ENCODE measurements at regions of chr5 and their contacts with region 1.

Region 1: GRCh38 chr5:154972476-154973080 is 31.7 kb downstream of the MRPL22 start:
- DNase-seq: peak; percentile 38 to 68 (median 67)
- H3K4me3 ChIP-seq: no peak overlapping the region
- H3K27ac ChIP-seq: no peak overlapping the region
- H3K4me1 ChIP-seq: peaks cover 0 to 2% (median 0%) of the 10 kb centered on the region in 4 experiments
- H3K27me3 ChIP-seq: no peaks in the 10 kb centered on the region

Region 2: GRCh38 chr5:154892369-154892771 is 80.2 kb before region 1 on chr5:
- CTCF ChIA-PET with region 1: no interaction called
- POLR2A ChIA-PET with region 1: no interaction called
- DNase-seq: no peak
- H3K4me3 ChIP-seq: no peak overlapping the region
- H3K27ac ChIP-seq: no peak overlapping the region
- H3K4me1 ChIP-seq: no peaks in the 10 kb centered on the region
- H3K27me3 ChIP-seq: no peaks in the 10 kb centered on the region

Region 3: GRCh38 chr5:154937718-154938466 is 34.7 kb before region 1 on chr5 and contains the start of gene GEMIN5:
- CTCF ChIA-PET with region 1: no interaction called
- POLR2A ChIA-PET with region 1: no interaction called
- DNase-seq: peak; percentile 84 to 92 (median 91)
- H3K4me3 ChIP-seq: peak within 1 kb of the TSS; percentile 50 to 96 (median 87)
- H3K27ac ChIP-seq: peak within 1 kb of the TSS; percentile 28 to 76
- H3K4me1 ChIP-seq: peaks cover 20 to 36% (median 33%) of the 10 kb centered on the region in 4 experiments
- H3K27me3 ChIP-seq: no peaks in the 10 kb centered on the region

Region 4: GRCh38 chr5:154962494-154962893 is 10.1 kb before region 1 on chr5:
- CTCF ChIA-PET with region 1: interaction called, 11 read pairs
- POLR2A ChIA-PET with region 1: no interaction called
- DNase-seq: no peak
- H3K4me3 ChIP-seq: no peak overlapping the region
- H3K27ac ChIP-seq: no peak overlapping the region
- H3K4me1 ChIP-seq: no peaks in the 10 kb centered on the region
- H3K27me3 ChIP-seq: no peaks in the 10 kb centered on the region

Region 5: DNA sequence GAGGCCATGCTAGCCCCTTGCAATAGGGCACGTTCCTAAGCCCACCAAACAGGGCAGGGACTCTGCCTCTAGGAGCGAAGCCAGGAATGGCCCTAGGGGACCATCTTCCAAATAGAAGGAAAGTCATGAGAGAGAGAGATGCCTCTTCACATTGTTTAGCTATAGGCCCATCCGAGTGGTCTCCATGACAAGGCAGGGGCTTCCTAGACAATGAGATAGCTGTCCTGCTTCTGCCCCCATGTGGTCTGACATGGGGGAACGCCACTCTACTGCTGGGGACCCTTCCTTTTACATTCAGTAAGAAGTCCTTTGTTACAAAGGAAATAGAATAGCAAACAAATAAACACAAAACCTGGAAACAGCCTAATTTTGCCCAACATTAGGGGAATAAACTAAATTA is 23.1 kb after region 1 on chr5:
- CTCF ChIA-PET with region 1: interaction called, 131 read pairs
- POLR2A ChIA-PET with region 1: no interaction called
- DNase-seq: peak in 2 of 3 donors; percentile 16 to 28
- H3K4me3 ChIP-seq: no peak overlapping the region
- H3K27ac ChIP-seq: no peak overlapping the region
- H3K4me1 ChIP-seq: peaks cover 0 to 16% (median 0%) of the 10 kb centered on the region in 4 experiments
- H3K27me3 ChIP-seq: no peaks in the 10 kb centered on the region

Region 6: DNA sequence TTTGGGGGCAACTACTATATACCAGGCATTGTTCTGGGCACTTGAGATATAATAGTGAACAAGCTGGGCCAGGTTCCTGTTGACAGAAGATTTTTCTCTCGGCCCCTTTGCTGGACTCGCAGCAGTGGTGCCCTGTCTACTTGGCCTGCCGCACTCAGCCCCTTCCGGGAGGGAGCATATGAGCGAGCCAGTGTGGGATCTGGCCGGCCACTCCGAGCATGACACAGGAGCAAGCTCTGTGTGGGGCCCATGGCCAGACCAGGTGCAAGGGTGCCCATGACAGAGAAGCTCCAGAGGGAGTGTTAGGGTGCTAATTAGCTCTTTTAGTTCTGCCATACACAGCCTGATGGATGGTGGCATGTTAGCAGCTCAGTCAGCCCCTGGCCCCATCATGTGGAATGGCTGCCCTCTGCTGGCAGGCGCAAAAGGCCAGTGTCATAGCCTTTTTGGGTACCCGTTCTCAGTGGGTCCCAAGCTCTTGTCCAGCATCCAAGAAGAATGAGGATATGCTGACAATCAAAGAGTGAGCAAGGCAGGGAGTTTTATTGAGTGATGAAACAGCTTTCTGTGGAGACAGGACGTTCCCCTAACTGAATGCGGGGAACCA is 31.7 kb after region 1 on chr5:
- CTCF ChIA-PET with region 1: interaction called, 131 read pairs
- POLR2A ChIA-PET with region 1: no interaction called
- DNase-seq: peak; percentile 27 to 51 (median 47)
- H3K4me3 ChIP-seq: no peak overlapping the region
- H3K27ac ChIP-seq: no peak overlapping the region
- H3K4me1 ChIP-seq: no peaks in the 10 kb centered on the region
- H3K27me3 ChIP-seq: no peaks in the 10 kb centered on the region